KBM-7 (cell line): ENCODE measurements at regions of chr7 and their contacts with region 1.

Region 1: GRCh38 chr7:43454936-43455518 is 127.9 kb upstream of the STK17A start:
- DNase-seq: peak; percentile 54

Region 2: DNA sequence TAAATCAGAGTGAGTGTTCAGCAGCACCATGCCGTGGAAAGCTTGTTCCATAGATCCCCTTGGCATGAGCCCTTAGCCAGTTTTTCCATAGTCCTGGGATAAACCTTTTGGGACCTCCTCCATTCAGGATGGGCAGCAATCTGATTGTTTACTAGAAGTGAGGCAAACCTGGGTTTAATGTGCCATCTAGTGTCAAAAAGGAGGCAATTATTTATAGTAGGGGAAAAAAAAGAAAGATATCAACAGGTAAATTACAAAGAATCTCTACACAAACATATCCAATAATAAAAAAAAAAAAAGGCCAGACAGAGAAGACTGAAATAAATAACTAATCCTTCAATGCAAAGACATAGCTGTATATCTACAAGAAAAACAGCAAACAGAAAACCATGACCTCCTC is 101.1 kb before region 1 on chr7:
- in situ Hi-C with region 1: no loop called
- DNase-seq: peak; percentile 3

Region 3: GRCh38 chr7:43834463-43835251 is 379.6 kb after region 1 on chr7:
- in situ Hi-C with region 1: loop called (anchors 25 kb)
- DNase-seq: peak; percentile 57